Activated CD4-positive, alpha-beta T cell treated with anti-CD3 and anti-CD28 coated beads, Interleukin-2, amount 10 ng/mL, durations not matched to agents 24 days and 14 days (primary cell): ENCODE measurements at regions of chr5 and their contacts with region 1.

Region 1: DNA sequence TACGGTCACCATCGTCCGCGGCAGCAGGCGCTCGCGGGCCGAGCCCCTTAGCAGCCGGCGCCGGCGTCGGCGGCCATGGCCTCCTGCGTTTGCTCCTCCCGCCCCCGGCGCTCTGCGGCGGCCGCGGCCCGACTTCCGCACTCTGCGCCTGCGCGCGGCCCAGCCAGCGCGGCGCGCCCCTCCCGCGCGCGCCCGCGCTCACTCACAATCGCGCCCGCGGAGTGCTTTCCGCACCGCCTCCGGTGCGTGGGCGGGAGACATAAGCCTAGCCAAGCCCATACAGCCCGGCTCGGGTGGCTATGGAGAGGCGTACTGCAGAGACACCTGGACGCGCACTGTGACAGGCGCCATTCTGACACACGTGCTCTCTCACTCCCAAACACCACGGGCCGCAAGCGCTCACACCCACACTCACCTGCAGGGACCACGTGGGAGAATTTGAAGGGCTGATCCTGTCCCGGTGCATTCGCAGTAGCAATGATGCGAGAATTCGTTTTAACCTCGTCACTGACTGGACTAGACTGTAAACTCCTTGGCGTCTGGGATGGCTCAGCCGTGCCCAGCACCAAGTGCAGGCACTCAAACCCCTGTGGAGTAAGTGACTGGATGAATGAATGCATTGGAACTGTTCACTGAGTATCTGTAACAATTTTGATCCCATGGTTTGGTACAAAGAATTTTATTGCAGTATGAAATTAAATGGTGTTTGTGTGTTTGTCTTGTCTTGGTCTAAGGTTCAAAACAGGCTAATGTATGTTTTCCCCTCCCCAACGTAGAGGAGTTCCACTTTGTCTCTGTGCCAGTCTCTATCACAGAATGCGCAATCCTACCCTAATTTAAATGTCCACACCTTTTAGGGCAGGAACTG is at the start of gene RNF145:
- DNase-seq: peak; percentile 97
- H3K4me3 Mint-ChIP-seq: peak within 1 kb of the TSS; percentile 99
- H3K27ac Mint-ChIP-seq: peak within 1 kb of the TSS; percentile 98
- H3K4me1 Mint-ChIP-seq: peaks cover 54% of the 10 kb centered on the region
- H3K27me3 Mint-ChIP-seq: no peaks in the 10 kb centered on the region
- total RNA-seq, gene RNF145: 141 and 149 TPM in 2 replicates

Region 2: GRCh38 chr5:158435161-158435616 is 774.5 kb before region 1 on chr5:
- intact Hi-C with region 1: loop called (anchors 10 kb)
- DNase-seq: peak; percentile 81
- H3K4me3 Mint-ChIP-seq: peak overlapping the region; percentile 76
- H3K27ac Mint-ChIP-seq: peak overlapping the region; percentile 83
- H3K4me1 Mint-ChIP-seq: peaks cover 48% of the 10 kb centered on the region
- H3K27me3 Mint-ChIP-seq: no peaks in the 10 kb centered on the region

Region 3: DNA sequence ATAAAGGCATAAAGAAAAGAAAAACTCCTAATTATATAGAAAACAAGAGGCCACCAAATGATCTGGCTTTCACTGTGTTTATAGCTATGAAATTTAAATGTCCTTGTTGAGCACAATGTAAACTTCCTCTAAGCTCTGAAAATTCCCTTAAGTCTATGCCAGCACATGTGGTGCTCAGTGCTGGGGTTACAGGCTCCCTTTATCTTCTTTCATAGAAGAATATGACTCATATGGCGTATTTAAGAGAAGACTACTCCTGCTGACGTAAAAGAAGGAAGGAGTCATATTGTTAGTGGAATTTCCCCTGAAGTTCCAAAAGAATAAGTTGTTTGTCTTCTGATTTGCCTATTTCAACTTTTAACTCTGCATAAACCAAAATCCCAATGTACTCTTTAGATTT is 30.7 kb before region 1 on chr5:
- intact Hi-C with region 1: loop called (anchors 1 kb)
- DNase-seq: no peak
- H3K4me3 Mint-ChIP-seq: peak overlapping the region; percentile 68
- H3K27ac Mint-ChIP-seq: peak overlapping the region; percentile 94
- H3K4me1 Mint-ChIP-seq: peaks cover 60% of the 10 kb centered on the region
- H3K27me3 Mint-ChIP-seq: no peaks in the 10 kb centered on the region

Region 4: DNA sequence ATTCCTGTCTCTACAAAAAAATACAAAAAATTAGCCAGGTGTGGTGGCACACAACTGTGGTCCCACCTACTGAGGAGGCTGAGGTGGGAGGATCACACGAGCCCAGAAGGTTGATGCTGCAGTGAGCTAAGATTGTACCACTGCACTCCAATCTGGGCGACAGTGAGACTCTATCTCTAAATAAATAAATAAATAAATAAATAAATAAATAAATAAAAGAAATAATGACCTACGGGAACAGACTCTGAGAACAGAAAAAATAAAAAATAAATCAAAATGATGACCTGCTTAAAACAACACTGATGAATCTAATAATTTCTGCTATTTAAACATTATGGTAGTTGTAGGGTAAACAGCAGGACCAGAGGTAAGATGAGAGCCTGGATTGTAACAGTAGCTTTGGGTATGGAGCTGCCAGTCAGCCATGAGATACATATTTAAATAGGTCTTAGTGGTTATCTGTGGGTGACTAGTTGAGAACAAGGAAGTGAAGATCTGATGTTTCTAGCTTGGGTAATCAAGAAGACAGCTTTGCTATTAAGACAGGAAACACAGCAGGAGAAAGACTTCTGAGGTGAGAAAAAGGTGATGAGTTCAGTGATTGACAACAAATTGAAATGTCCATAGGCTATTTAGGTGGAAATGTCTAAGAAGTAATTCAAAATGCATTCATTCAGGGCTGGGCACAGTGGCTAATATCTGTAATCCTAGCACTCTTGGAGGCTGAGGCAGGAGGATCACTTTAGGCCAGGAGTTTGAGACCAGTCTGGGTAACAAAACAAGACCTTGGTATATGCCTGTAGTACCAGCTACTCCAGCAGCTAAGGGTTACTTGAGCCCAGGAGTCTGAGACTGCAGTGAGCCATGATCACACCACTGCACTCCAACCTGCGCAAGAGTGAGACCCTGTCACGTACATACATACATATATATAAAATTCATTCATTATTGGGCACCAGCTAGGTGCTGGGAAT is 11.3 kb before region 1 on chr5:
- intact Hi-C with region 1: loop called (anchors 1 kb)
- DNase-seq: no peak
- H3K4me3 Mint-ChIP-seq: peak overlapping the region; percentile 3
- H3K27ac Mint-ChIP-seq: peak overlapping the region; percentile 83
- H3K4me1 Mint-ChIP-seq: peaks cover 51% of the 10 kb centered on the region
- H3K27me3 Mint-ChIP-seq: no peaks in the 10 kb centered on the region

Region 5: DNA sequence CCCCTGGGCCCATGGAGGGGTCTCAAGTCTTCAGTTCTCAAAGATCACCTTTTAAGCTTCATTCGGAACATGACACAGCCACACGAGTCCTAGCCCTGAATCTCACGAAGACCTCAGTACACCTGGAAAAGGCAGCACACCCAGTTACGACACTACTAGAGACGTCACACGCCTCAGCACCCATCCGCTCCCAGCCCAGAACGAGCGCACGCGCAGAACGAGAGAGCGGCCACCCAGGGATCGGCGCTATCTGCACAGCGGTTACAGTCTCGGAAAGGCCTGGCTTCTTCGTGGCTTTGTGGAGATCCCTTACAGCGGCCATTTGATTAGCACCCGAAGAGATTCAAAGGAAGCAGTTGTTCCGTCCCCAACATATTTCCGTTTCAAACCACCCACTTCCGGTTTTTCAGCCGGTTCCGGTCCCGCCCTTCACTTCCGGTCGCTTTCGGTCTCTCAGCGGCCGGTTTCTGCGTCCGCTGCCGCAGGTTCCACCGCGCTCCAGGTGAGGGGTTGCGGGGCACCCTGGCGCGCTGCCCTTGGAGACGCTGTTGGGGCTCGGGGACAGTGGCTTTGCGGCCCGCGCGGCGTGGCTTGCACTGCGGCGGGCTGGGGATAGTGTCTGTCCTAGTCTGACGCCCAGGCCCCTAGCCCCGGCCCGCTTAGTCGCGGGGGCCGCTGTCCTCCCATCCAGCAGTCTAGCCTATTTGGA is 53.3 kb after region 1 on chr5 and contains the start of gene UBLCP1:
- intact Hi-C with region 1: loop called (anchors 1 kb)
- DNase-seq: peak; percentile 92
- H3K4me3 Mint-ChIP-seq: peak within 1 kb of the TSS; percentile 92
- H3K27ac Mint-ChIP-seq: peak within 1 kb of the TSS; percentile 97
- H3K4me1 Mint-ChIP-seq: peaks cover 24% of the 10 kb centered on the region
- H3K27me3 Mint-ChIP-seq: peaks cover 3% of the 10 kb centered on the region
- total RNA-seq, gene UBLCP1: 30.2 and 31.2 TPM in 2 replicates

Region 6: GRCh38 chr5:159412284-159413046 is 202.8 kb after region 1 on chr5:
- intact Hi-C with region 1: loop called (anchors 1 kb)
- DNase-seq: peak; percentile 94
- H3K4me3 Mint-ChIP-seq: peak overlapping the region; percentile 46
- H3K27ac Mint-ChIP-seq: peak overlapping the region; percentile 82
- H3K4me1 Mint-ChIP-seq: peaks cover 58% of the 10 kb centered on the region
- H3K27me3 Mint-ChIP-seq: peaks cover 12% of the 10 kb centered on the region

Region 7: GRCh38 chr5:160119142-160119904 is 909.7 kb after region 1 on chr5 and contains the start of gene PWWP2A:
- intact Hi-C with region 1: loop called (anchors 2 kb)
- DNase-seq: peak; percentile 99
- H3K4me3 Mint-ChIP-seq: peak within 1 kb of the TSS; percentile 91
- H3K27ac Mint-ChIP-seq: peak within 1 kb of the TSS; percentile 96
- H3K4me1 Mint-ChIP-seq: peaks cover 14% of the 10 kb centered on the region
- H3K27me3 Mint-ChIP-seq: peaks cover 11% of the 10 kb centered on the region
- total RNA-seq, gene PWWP2A: 26.1 and 26.7 TPM in 2 replicates